Ovary (tissue), 10 donors: ENCODE measurements at regions of chr2 and their contacts with region 1.

Region 1: GRCh38 chr2:101036562-101037457 is 34.7 kb downstream of the RPL31 start:
- DNase-seq: no peak
- H3K4me3 ChIP-seq: no peak overlapping the region
- H3K27ac ChIP-seq: no peak overlapping the region
- H3K4me1 ChIP-seq: no peaks in the 10 kb centered on the region
- H3K27me3 ChIP-seq: no peaks in the 10 kb centered on the region
- CTCF ChIP-seq: peak in 1 of 3 donors; percentile 16
- EP300 ChIP-seq: no peak
- POLR2A ChIP-seq: no peak

Region 2: GRCh38 chr2:101151141-101151858 is 114.5 kb after region 1 on chr2 and contains the start of gene TBC1D8:
- intact Hi-C with region 1: loop called in 1 of 4 experiments (anchors 5 kb)
- DNase-seq: peak; percentile 88 to 94 (median 93)
- H3K4me3 ChIP-seq: peak within 1 kb of the TSS; percentile 76
- H3K27ac ChIP-seq: peak within 1 kb of the TSS; percentile 36 to 79
- H3K4me1 ChIP-seq: peaks cover 15% of the 10 kb centered on the region
- H3K27me3 ChIP-seq: no peaks in the 10 kb centered on the region
- CTCF ChIP-seq: peak in 1 of 3 donors; percentile 11
- EP300 ChIP-seq: no peak
- POLR2A ChIP-seq: peak; percentile 57
- total RNA-seq, gene TBC1D8: 14.3 to 44.6 (median 15.8) TPM

Region 3: GRCh38 chr2:101197215-101197745 is 160.5 kb after region 1 on chr2:
- intact Hi-C with region 1: loop called in 2 of 4 experiments (anchors 10 kb)
- DNase-seq: no peak
- H3K4me3 ChIP-seq: no peak overlapping the region
- H3K27ac ChIP-seq: no peak overlapping the region
- H3K4me1 ChIP-seq: no peaks in the 10 kb centered on the region
- H3K27me3 ChIP-seq: no peaks in the 10 kb centered on the region
- CTCF ChIP-seq: no peak
- EP300 ChIP-seq: no peak
- POLR2A ChIP-seq: no peak